AG04449 (cell line): ENCODE measurements at regions of chr5 and their contacts with region 1.

Region 1: GRCh38 chr5:129767906-129768380 is 20.0 kb downstream of the MINAR2 start:
- DNase-seq: peak; percentile 49
- H3K4me3 ChIP-seq: no peak overlapping the region
- CTCF ChIP-seq: peak; percentile 90

Region 2: DNA sequence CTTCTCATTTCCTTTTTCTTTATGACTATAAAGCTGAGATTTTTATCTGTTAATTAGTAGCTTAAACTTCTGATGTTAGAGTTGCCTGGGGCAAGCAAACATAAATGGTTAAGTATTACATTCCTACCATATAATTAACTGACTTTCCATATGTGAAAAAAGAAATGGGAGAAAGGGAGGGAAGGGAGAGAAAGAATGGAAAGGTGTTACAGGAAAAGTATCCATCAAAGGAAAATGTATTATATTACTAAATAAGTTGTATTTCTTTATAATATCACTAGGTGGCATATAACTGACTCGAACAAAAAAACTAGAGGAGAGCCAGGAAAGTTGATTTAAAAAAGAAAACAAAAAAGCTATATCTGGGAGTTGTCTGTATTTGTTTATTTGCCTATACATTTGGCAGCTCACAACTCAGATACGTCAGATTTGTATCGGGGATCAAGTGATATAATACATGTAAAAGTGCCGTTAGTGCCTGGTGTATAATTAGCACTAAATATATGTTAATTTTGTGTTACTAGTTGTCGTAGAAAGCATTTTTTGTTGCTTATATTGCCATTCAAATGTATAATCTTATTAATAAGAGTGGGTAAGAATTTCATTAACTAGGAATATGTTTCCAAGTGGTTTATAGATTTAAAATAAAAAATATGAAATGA is 367.5 kb before region 1 on chr5:
- CTCF ChIA-PET with region 1: interaction called, 19 read pairs
- POLR2A ChIA-PET with region 1: no interaction called
- DNase-seq: no peak
- H3K4me3 ChIP-seq: no peak overlapping the region
- CTCF ChIP-seq: no peak

Region 3: DNA sequence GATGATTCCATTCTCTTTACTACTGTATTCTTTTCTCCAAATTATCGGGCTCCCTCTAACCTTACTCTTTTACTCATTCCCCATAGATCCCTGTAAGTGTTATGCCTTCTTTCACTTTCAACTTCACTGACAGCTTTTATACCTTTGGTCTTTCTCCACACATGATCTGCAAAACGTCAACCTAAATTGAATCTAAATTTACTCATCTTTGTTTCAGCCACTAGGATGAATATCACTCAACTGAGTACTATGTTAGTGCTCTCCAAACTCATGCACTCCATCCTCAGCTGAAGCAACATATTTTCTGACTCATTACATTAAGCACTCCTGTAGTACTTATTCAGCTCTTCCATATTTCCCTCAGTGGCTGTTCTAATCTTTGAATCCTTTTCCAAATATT is 174.4 kb before region 1 on chr5:
- CTCF ChIA-PET with region 1: no interaction called
- POLR2A ChIA-PET with region 1: no interaction called
- DNase-seq: no peak
- H3K4me3 ChIP-seq: no peak overlapping the region
- CTCF ChIP-seq: no peak

Region 4: DNA sequence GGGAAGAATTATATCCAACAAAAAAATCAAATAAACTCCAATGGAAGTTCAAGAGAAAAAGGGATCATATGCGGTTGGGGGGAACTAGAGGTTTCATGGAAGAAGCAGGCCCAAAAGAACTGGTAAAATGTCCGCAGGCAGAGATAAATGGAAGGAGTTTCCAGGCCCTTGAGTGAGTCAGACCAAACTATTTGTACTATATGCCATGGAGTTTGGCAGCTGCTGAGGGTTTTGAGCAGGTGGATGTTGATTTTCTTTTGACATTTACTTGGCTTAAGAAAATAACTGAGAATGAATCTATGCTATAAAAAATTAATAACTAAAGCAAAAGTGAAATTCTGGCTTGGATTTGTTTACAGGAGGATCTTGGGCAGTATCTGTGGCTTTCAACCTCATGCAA is 13.7 kb after region 1 on chr5:
- CTCF ChIA-PET with region 1: interaction called, 18 read pairs
- POLR2A ChIA-PET with region 1: no interaction called
- DNase-seq: no peak
- H3K4me3 ChIP-seq: no peak overlapping the region
- CTCF ChIP-seq: no peak

Region 5: GRCh38 chr5:130141659-130142320 is 373.8 kb after region 1 on chr5:
- CTCF ChIA-PET with region 1: interaction called, 13 read pairs
- POLR2A ChIA-PET with region 1: no interaction called
- DNase-seq: no peak
- H3K4me3 ChIP-seq: no peak overlapping the region
- CTCF ChIP-seq: peak; percentile 81